SK-N-SH (cell line): ENCODE measurements at regions of chr11 and their contacts with region 1.

Region 1: GRCh38 chr11:61516675-61517572 is 8.4 kb downstream of the LRRC10B start:
- DNase-seq: peak; percentile 93
- H3K4me3 ChIP-seq: peak overlapping the region in 1 of 2 experiments; percentile 44; a peak in 1 of 4 replicates
- H3K27ac ChIP-seq: peak overlapping the region in 1 of 2 experiments; percentile 7; a peak in 1 of 4 replicates
- H3K4me1 ChIP-seq: peaks cover 0 to 38% of the 10 kb centered on the region in 2 experiments; a peak in 1 of 4 replicates
- H3K27me3 ChIP-seq: no peaks in the 10 kb centered on the region
- CTCF ChIP-seq: peak; percentile 97
- EP300 ChIP-seq: no peak
- RAD21 ChIP-seq: peak; percentile 84

Region 2: DNA sequence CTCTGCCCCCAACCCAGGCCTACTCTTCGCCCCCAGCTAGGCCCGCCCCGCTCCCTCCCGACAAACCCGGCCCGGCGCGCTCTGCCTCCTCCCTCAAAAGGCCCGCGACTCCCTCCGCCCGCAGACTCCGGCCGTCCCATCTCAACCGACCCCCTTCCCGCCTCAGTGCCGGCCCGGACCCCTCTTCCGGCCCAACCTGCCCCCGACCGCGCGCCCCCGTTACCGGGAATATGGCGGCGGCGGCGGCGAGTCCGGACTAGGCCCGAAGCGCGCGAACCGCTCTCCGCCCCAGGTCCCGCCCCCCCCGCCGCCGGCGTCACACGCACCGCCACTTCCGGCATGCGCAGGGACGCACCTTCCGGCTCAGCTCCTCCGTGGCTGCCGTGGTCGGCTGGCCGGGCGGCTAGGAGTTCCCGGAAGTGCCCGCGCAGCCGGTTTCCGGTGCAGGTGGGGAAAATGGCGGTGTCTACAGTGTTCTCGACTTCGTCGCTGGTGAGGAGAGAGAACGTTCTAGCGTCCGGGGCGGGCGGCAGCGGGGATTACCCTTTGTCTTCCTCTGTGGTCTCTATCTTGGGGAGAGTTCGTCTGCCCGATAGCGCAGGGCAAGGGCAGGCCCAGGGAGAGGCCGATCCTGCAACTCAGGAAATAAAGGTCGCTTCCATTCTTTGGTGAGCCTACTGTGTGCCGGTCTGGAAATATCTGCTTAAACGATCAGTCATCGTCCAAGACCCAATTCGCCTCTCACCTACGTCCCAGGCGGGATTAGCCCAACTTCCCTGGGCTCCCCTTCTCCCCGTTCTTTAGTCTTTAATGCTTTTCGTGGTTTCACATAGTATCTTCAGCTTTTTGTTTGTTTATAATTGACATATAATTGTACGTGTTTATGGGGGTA is 87.0 kb before region 1 on chr11 and contains the starts of genes CPSF7 and SDHAF2:
- CTCF ChIA-PET with region 1: interaction called, 28 read pairs
- POLR2A ChIA-PET with region 1: interaction called, 5 read pairs
- DNase-seq: peak; percentile 96
- H3K4me3 ChIP-seq: peak within 1 kb of the TSS; percentile 87 to 95
- H3K27ac ChIP-seq: peak within 1 kb of the TSS; percentile 93 to 96
- H3K4me1 ChIP-seq: peaks cover 9 to 14% of the 10 kb centered on the region in 2 experiments
- H3K27me3 ChIP-seq: no peaks in the 10 kb centered on the region
- CTCF ChIP-seq: no peak
- EP300 ChIP-seq: no peak
- RAD21 ChIP-seq: no peak
- polyA plus RNA-seq, gene CPSF7: 44.0 and 49.4 TPM in 2 replicates
- polyA plus RNA-seq, gene SDHAF2: 81.7 and 116 TPM in 2 replicates

Region 3: GRCh38 chr11:61495801-61496597 is 20.9 kb before region 1 on chr11:
- CTCF ChIA-PET with region 1: interaction called, 670 read pairs
- POLR2A ChIA-PET with region 1: no interaction called
- DNase-seq: peak; percentile 65
- H3K4me3 ChIP-seq: no peak overlapping the region
- H3K27ac ChIP-seq: no peak overlapping the region
- H3K4me1 ChIP-seq: peaks cover 0 to 12% of the 10 kb centered on the region in 2 experiments; a peak in 1 of 4 replicates
- H3K27me3 ChIP-seq: no peaks in the 10 kb centered on the region
- CTCF ChIP-seq: no peak
- EP300 ChIP-seq: no peak
- RAD21 ChIP-seq: no peak

Region 4: GRCh38 chr11:61541598-61541997 is 24.7 kb after region 1 on chr11:
- CTCF ChIA-PET with region 1: interaction called, 334 read pairs
- POLR2A ChIA-PET with region 1: interaction called, 4 read pairs
- DNase-seq: peak; percentile 63
- H3K4me3 ChIP-seq: no peak overlapping the region
- H3K27ac ChIP-seq: peak overlapping the region in 1 of 2 experiments; percentile 88; a peak in 2 of 4 replicates
- H3K4me1 ChIP-seq: peaks cover 0 to 63% of the 10 kb centered on the region in 2 experiments; a peak in 2 of 4 replicates
- H3K27me3 ChIP-seq: no peaks in the 10 kb centered on the region
- CTCF ChIP-seq: no peak
- EP300 ChIP-seq: no peak
- RAD21 ChIP-seq: no peak

Region 5: GRCh38 chr11:61617515-61617914 is 100.6 kb after region 1 on chr11:
- CTCF ChIA-PET with region 1: interaction called, 35 read pairs
- POLR2A ChIA-PET with region 1: no interaction called
- DNase-seq: no peak
- H3K4me3 ChIP-seq: no peak overlapping the region
- H3K27ac ChIP-seq: no peak overlapping the region
- H3K4me1 ChIP-seq: peaks cover 0 to 2% of the 10 kb centered on the region in 2 experiments; a peak in 1 of 4 replicates
- H3K27me3 ChIP-seq: peaks cover 9% of the 10 kb centered on the region; the same call in 1 of the 2 replicates
- CTCF ChIP-seq: peak; percentile 17; the same call in 1 of the 2 replicates
- EP300 ChIP-seq: no peak
- RAD21 ChIP-seq: no peak

Region 6: DNA sequence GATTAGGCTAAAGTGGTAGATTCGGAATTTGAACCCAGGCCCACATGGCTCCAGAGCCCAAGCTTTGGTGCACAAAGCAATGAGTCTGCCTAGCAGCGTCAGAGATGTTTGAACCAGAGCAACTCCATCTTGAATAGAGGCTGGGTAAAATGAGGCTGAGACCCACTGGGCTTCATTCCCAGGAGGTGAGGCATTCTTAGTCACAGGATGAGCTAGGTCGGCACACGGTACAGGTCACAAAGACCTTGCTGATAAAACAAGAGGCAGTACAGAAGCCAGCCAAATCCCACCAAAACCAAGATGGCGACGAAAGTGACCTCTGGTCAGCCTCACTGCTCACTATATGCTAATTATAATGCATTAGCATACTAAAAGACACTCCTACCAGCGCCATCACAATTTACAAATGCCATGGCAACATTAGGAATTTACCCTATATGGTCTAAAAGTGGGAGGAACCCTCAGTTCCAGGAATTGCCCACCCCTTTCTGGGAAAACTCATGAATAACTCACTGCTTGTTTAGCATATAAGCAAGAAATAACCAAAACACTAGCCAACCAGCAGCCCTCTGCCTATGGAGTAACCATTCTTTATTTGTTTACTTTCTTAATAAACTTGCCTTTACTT is 123.0 kb after region 1 on chr11:
- CTCF ChIA-PET with region 1: interaction called, 33 read pairs
- POLR2A ChIA-PET with region 1: interaction called, 3 read pairs
- DNase-seq: no peak
- H3K4me3 ChIP-seq: no peak overlapping the region
- H3K27ac ChIP-seq: no peak overlapping the region
- H3K4me1 ChIP-seq: peaks cover 0 to 2% of the 10 kb centered on the region in 2 experiments; a peak in 1 of 4 replicates
- H3K27me3 ChIP-seq: no peaks in the 10 kb centered on the region; the same call in 1 of the 2 replicates
- CTCF ChIP-seq: no peak
- EP300 ChIP-seq: no peak
- RAD21 ChIP-seq: no peak